Ovary (tissue), 10 donors: ENCODE measurements at regions of chr2 and their contacts with region 1.

Region 1: GRCh38 chr2:214117054-214117453 is 293.8 kb upstream of the VWC2L start:
- DNase-seq: no peak
- H3K4me3 ChIP-seq: no peak overlapping the region
- H3K27ac ChIP-seq: no peak overlapping the region
- H3K4me1 ChIP-seq: no peaks in the 10 kb centered on the region
- H3K27me3 ChIP-seq: no peaks in the 10 kb centered on the region
- CTCF ChIP-seq: no peak
- EP300 ChIP-seq: no peak
- POLR2A ChIP-seq: no peak

Region 2: DNA sequence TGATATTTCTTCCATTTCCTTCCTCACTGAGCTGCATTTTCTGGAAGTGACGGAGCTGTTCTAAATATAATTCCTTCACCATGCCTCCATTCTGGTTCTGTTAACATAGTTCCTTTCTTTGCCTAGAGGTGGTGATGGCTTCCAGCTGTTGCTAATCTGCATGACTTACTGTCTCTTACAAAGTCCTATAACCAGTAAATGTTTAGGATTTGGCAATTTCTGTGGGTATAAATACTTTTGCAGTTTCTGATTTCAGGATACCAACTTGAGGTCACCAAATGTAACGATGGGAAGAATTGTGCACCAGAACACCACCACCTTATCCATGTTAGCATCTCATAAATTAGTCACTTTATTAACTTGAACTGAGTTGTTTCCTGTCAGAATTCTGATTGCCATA is 1420.6 kb after region 1 on chr2:
- intact Hi-C with region 1: loop called in 1 of 4 experiments (anchors 10 kb)
- DNase-seq: no peak
- H3K4me3 ChIP-seq: no peak overlapping the region
- H3K27ac ChIP-seq: no peak overlapping the region
- H3K4me1 ChIP-seq: no peaks in the 10 kb centered on the region
- H3K27me3 ChIP-seq: no peaks in the 10 kb centered on the region
- CTCF ChIP-seq: no peak
- EP300 ChIP-seq: no peak
- POLR2A ChIP-seq: no peak